ENCODE measurements at regions of chr12 and their contacts with region 1.

Region 1: GRCh38 chr12:29103539-29103974 is 45.5 kb upstream of the FAR2 start:
- DNase-seq: peak; percentile 72
- H3K4me3 Mint-ChIP-seq: peak overlapping the region; percentile 10
- H3K27ac Mint-ChIP-seq: peak overlapping the region; percentile 90
- H3K4me1 Mint-ChIP-seq: peaks cover 38% of the 10 kb centered on the region
- H3K27me3 Mint-ChIP-seq: no peaks in the 10 kb centered on the region

Region 2: GRCh38 chr12:29088611-29089219 is 14.8 kb before region 1 on chr12:
- CTCF ChIA-PET with region 1: interaction called, 13 read pairs
- DNase-seq: no peak
- H3K4me3 Mint-ChIP-seq: no peak overlapping the region
- H3K27ac Mint-ChIP-seq: no peak overlapping the region
- H3K4me1 Mint-ChIP-seq: peaks cover 2% of the 10 kb centered on the region
- H3K27me3 Mint-ChIP-seq: peaks cover 35% of the 10 kb centered on the region

Measured in activated naive CD4-positive, alpha-beta T cell treated with anti-CD3 and anti-CD28 coated beads, Interleukin-2, amount 10 ng/mL, durations not matched to agents 7 days and 5 days (primary cell).